ENCODE measurements at regions of chr4 and their contacts with region 1.

Region 1: DNA sequence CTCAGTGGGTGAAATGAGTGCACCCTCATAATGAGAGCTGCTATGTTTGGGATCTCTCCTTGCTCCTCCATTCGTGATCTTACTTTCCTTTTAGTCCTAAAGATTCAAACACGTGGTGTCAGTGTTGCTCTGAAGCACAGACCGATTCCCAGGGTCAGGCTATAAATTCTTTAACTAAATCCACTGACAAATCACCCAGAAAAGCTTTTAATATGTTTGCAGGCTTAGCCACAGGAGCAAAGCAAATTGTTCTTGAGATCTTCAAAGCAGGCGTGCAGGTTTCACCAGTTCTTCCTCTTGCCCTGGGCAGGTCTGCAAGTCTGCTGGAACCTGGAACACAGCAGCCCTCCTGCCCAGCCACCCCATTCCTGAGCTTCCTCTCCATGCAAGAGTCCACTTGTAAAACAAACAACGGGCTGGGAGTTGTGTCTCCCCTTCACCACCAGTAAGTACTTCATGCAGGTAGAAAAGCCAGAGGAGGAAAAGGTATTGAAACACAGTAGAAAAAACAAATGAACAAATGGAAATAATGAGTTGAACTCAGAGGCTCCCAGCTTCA is 70.1 kb upstream of the ENPP6 start:
- DNase-seq: no peak
- H3K4me3 ChIP-seq: no peak overlapping the region
- H3K27ac ChIP-seq: no peak overlapping the region
- H3K4me1 ChIP-seq: peaks cover 0 to 8% (median 4%) of the 10 kb centered on the region in 4 donors
- H3K27me3 ChIP-seq: no peaks in the 10 kb centered on the region
- CTCF ChIP-seq: peak; percentile 34 to 51

Region 2: GRCh38 chr4:184538023-184538599 is 250.3 kb after region 1 on chr4:
- intact Hi-C with region 1: loop called (anchors 5 kb)
- DNase-seq: peak; percentile 92
- H3K4me3 ChIP-seq: peak overlapping the region; percentile 60 to 66
- H3K27ac ChIP-seq: peak overlapping the region; percentile 93
- H3K4me1 ChIP-seq: peaks cover 0 to 31% (median 12%) of the 10 kb centered on the region in 4 donors
- H3K27me3 ChIP-seq: no peaks in the 10 kb centered on the region
- CTCF ChIP-seq: peak; percentile 72 to 80

Measured in tibial artery (tissue), 4 donors.